PC-3 (cell line): ENCODE measurements at regions of chr4 and their contacts with region 1.

Region 1: GRCh38 chr4:92305148-92305877 is 1.5 kb downstream of the GRID2 start:
- DNase-seq: peak; percentile 63
- ATAC-seq: peak; percentile 85
- H3K4me3 ChIP-seq: peak overlapping the region; percentile 80
- H3K27ac ChIP-seq: no peak overlapping the region
- H3K4me1 ChIP-seq: peaks cover 11% of the 10 kb centered on the region; the same call in 1 of the 2 replicates
- H3K27me3 ChIP-seq: no peaks in the 10 kb centered on the region
- CTCF ChIP-seq: no peak

Region 2: GRCh38 chr4:91113130-91113706 is 1192.1 kb before region 1 on chr4:
- CTCF ChIA-PET with region 1: no interaction called
- POLR2A ChIA-PET with region 1: no interaction called
- intact Hi-C with region 1: loop called (anchors 10 kb)
- DNase-seq: peak; percentile 50
- ATAC-seq: no peak; the same call in 1 of the 2 replicates
- H3K4me3 ChIP-seq: no peak overlapping the region
- H3K27ac ChIP-seq: no peak overlapping the region
- H3K4me1 ChIP-seq: no peaks in the 10 kb centered on the region
- H3K27me3 ChIP-seq: no peaks in the 10 kb centered on the region
- CTCF ChIP-seq: peak; percentile 78

Region 3: GRCh38 chr4:92387459-92388069 is 82.3 kb after region 1 on chr4:
- CTCF ChIA-PET with region 1: no interaction called
- POLR2A ChIA-PET with region 1: no interaction called
- intact Hi-C with region 1: loop called (anchors 5 kb)
- DNase-seq: peak; percentile 69
- ATAC-seq: peak; percentile 65
- H3K4me3 ChIP-seq: no peak overlapping the region
- H3K27ac ChIP-seq: no peak overlapping the region
- H3K4me1 ChIP-seq: no peaks in the 10 kb centered on the region
- H3K27me3 ChIP-seq: no peaks in the 10 kb centered on the region
- CTCF ChIP-seq: peak; percentile 73

Region 4: DNA sequence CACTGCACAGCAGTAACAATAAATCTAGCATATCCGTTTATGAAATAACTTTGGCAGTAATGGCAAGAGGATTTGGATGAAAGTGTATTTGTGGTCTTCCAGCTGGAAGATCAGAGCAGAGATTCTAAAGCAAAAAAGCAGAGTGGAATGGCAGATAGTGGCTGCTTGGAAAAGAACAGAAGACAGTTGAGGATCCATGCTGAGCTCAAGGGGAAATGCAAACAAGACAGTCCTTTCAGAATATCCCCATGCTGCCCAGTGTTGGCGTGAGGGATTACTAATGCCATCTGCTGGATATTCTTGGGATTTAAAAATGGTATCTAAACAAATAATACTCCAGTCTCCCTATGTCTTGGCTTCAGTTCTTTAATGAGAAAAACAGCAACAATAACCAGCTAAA is 894.2 kb after region 1 on chr4:
- CTCF ChIA-PET with region 1: interaction called, 3 read pairs
- POLR2A ChIA-PET with region 1: no interaction called
- intact Hi-C with region 1: loop called (anchors 5 kb)
- DNase-seq: peak; percentile 61
- ATAC-seq: peak; percentile 77
- H3K4me3 ChIP-seq: no peak overlapping the region
- H3K27ac ChIP-seq: no peak overlapping the region
- H3K4me1 ChIP-seq: no peaks in the 10 kb centered on the region
- H3K27me3 ChIP-seq: no peaks in the 10 kb centered on the region
- CTCF ChIP-seq: peak; percentile 62